Lower lobe of right lung (tissue), 2 donors: ENCODE measurements at regions of chr11 and their contacts with region 1.

Region 1: DNA sequence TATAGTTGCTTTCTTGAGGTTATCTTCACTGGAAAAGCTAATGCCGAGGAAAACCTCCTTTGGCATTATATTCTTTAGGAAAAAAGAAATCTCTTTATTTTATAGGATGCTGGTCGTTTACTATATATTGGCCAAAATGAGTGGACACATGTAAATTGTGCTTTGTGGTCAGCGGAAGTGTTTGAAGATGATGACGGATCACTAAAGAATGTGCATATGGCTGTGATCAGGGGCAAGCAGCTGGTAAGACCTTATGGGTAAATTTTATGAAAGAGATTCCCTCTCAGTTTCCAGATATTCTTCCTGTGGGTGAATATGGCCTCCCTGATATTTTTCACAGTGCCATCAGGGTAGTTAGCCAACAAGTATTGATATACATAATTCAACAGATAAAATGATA is 29.4 kb upstream of the TTC36 start:
- DNase-seq: no peak
- ATAC-seq: no peak
- H3K4me3 ChIP-seq: no peak overlapping the region
- H3K27ac ChIP-seq: no peak overlapping the region
- H3K4me1 ChIP-seq: no peaks in the 10 kb centered on the region
- H3K27me3 ChIP-seq: no peaks in the 10 kb centered on the region
- CTCF ChIP-seq: no peak

Region 2: DNA sequence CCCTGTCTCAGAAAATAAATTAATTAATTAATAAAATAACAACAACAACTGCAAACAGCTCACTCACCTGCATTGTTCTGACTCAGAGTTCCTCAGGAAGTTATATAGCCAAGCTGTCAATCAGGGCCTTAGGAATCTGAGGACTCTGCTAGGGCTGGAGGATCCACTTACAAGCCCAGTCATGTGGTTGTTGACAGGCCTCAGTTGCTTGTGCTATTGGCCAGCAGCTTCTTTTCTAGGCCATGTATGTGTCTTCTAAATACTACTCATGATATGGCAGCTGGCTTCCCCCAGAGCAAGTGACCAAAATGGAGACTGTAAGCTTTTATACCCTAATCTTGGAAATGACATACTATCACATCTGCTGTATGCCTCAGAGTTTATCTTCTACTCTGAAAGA is 117.3 kb before region 1 on chr11:
- intact Hi-C with region 1: loop called (anchors 10 kb)
- DNase-seq: no peak
- ATAC-seq: no peak
- H3K4me3 ChIP-seq: no peak overlapping the region
- H3K27ac ChIP-seq: no peak overlapping the region
- H3K4me1 ChIP-seq: no peaks in the 10 kb centered on the region
- H3K27me3 ChIP-seq: no peaks in the 10 kb centered on the region
- CTCF ChIP-seq: no peak